ENCODE measurements at regions of chr21 and their contacts with region 1.

Region 1: GRCh38 chr21:31570824-31571566 is 88.5 kb upstream of the SOD1 start:
- DNase-seq: no peak
- H3K4me3 Mint-ChIP-seq: no peak overlapping the region
- H3K27ac Mint-ChIP-seq: no peak overlapping the region
- H3K4me1 Mint-ChIP-seq: peaks cover 2% of the 10 kb centered on the region
- H3K27me3 Mint-ChIP-seq: no peaks in the 10 kb centered on the region

Region 2: GRCh38 chr21:31558962-31559367 is 12.0 kb before region 1 on chr21:
- CTCF ChIA-PET with region 1: interaction called, 12 read pairs
- POLR2A ChIA-PET with region 1: interaction called, 5 read pairs
- DNase-seq: peak; percentile 94
- H3K4me3 Mint-ChIP-seq: peak overlapping the region; percentile 83
- H3K27ac Mint-ChIP-seq: no peak overlapping the region
- H3K4me1 Mint-ChIP-seq: peaks cover 45% of the 10 kb centered on the region
- H3K27me3 Mint-ChIP-seq: peaks cover 28% of the 10 kb centered on the region

Region 3: DNA sequence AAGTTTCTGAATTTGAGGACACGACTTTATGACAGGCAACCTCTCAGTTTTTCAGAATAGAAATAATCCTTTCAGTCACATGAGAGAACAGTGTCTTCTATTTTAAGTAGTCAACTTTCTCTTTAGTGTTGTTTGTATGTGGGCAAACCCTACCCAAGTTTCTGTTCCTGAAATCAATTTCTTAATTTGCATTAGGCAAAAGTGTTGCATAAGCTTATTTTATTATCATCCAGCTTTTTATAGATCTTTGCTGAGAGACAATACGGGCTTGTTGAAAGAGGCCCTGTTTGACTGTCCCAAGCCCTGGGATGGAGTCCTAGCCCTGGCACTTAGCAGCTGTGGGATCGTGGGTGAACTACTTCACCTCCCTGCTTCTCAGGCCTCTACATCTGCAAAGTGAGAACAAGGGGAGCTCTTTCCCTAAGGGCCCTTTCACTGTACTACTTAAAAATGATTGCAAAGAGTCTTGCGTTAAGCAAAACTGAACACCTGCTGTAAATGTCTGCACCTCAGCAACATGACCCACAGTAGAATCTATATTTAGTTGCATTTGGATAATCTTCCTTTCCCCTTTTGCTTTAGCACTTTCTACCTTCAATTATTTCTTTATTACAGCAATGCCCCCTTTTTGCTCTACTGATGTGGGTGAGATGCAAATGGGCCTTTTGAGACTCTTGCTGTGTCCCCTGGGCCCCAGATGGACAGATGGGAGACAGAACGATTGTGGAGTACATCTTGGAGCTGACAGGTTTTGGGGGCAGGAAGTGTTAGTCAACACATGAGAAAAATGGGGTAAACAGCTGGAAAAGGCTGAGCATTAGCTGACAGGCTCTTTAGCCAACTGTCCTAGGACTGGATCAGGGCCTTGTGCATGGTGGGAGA is 201.9 kb after region 1 on chr21:
- CTCF ChIA-PET with region 1: no interaction called
- POLR2A ChIA-PET with region 1: no interaction called
- DNase-seq: no peak
- H3K4me3 Mint-ChIP-seq: no peak overlapping the region
- H3K27ac Mint-ChIP-seq: no peak overlapping the region
- H3K4me1 Mint-ChIP-seq: no peaks in the 10 kb centered on the region
- H3K27me3 Mint-ChIP-seq: no peaks in the 10 kb centered on the region

Measured in activated CD4-positive, alpha-beta T cell treated with anti-CD3 and anti-CD28 coated beads, Interleukin-2, amount 10 ng/mL, durations not matched to agents 7 days and 5 days (primary cell).